Naive thymus-derived CD4-positive, alpha-beta T cell (primary cell): ENCODE measurements at regions of chr11 and their contacts with region 1.

Region 1: GRCh38 chr11:355581-356458 is 13.5 kb upstream of the B4GALNT4 start:
- DNase-seq: peak; percentile 74 to 92 (median 90)
- ATAC-seq: peak; percentile 89
- H3K4me3 ChIP-seq: peak overlapping the region; percentile 66
- H3K4me3 Mint-ChIP-seq: peak overlapping the region in 8 of 10 donors; percentile 83 to 93 (median 88)
- H3K27ac ChIP-seq: peak overlapping the region; percentile 97
- H3K27ac Mint-ChIP-seq: peak overlapping the region in 6 of 9 donors; percentile 89 to 99 (median 98)
- H3K4me1 ChIP-seq: peaks cover 9 to 19% of the 10 kb centered on the region in 2 donors
- H3K4me1 Mint-ChIP-seq: peaks cover 29 to 45% (median 37%) of the 10 kb centered on the region in 7 donors
- H3K27me3 ChIP-seq: no peaks in the 10 kb centered on the region
- H3K27me3 Mint-ChIP-seq: peaks cover 0 to 6% (median 0%) of the 10 kb centered on the region in 5 donors

Region 2: DNA sequence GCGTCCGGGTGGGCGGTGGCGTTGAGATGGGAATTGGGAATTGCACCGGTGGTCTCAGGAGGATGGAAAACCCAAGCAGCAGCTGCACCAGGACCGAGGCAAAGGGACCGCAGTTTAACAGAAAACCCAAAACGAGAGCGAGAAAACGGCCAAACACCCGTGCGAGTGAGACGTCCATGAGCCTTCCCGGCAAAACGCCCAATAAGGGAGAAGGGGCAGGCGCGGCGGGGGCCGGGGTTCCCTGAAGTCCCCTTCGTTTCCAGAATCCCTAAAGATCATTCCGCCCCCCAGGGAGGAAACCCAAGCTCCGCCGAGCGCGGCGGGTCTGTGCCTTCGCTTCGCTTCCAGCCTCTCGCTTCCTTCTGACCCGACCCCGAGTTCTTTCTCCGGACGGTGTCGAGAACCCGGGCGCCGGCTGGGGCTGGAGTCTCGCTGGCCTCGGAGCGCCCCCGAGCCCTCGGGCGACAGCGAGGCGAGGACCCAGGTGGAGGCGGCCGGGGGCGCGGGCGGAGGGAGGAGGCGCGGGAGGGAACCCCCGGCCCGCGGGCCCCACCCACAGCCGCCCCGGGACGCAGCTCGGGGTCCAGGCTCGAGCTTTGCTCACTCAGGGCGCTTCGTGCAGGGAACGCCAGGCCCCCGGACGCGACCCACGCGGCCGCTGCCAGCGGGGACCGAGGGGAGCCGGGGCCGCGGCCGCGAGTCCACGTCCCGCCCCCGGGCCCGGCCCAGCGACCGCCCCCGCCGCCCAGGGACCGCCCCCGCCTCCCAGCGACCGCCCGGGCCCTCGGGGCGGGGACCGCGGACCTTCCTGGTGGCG is 67.3 kb before region 1 on chr11 and contains the start of gene PGGHG:
- CTCF ChIA-PET with region 1: interaction called, 3 read pairs
- POLR2A ChIA-PET with region 1: interaction called, 22 read pairs
- intact Hi-C with region 1: no loop called
- DNase-seq: peak in 5 of 9 donors; percentile 40 to 72 (median 49)
- ATAC-seq: peak; percentile 65
- H3K4me3 ChIP-seq: peak within 1 kb of the TSS; percentile 64
- H3K4me3 Mint-ChIP-seq: peak within 1 kb of the TSS; percentile 88 to 100 (median 98)
- H3K27ac ChIP-seq: peak within 1 kb of the TSS; percentile 100
- H3K27ac Mint-ChIP-seq: peak within 1 kb of the TSS; percentile 89 to 100 (median 98)
- H3K4me1 ChIP-seq: peaks cover 16% of the 10 kb centered on the region in 2 donors
- H3K4me1 Mint-ChIP-seq: peaks cover 22 to 52% (median 38%) of the 10 kb centered on the region in 7 donors
- H3K27me3 ChIP-seq: no peaks in the 10 kb centered on the region
- H3K27me3 Mint-ChIP-seq: peaks cover 0 to 14% (median 0%) of the 10 kb centered on the region in 5 donors
- total RNA-seq, gene PGGHG: 325 to 656 (median 348) TPM

Region 3: DNA sequence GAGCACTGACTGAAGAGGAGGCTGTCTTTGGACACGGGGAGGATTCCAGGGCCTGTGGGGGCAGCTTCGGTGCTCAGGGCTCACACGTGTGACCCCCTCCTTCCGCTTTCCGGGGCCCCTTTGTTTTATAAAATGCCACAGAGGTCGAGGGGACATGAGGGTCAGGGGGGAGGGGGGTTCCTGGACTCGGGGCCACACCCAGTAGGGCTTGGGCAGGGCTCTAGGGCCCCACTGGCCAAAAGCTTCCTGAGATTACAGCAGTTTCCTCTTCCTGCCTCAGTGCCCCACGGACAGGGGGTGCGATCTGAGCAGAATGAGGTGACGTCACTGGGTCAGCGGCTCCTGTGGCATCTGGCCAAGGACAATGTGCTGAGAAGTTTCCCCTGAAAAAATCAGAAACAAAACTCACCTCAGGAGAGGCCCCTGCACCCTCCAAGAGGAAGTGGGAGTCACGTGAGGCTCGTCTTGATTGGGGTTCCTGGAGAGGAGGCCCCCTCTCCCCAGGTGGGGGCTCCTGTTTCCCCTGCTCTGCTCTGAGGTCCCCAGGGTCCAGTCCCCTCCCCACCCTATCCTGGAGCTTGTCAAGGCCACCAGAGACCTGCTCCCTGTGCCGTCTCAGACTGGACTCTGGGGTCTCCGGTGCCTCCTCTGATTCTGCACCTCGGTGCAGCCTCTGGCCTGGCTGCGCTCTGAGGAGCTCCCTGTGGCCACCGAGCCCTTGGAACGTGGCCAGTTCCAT is 28.8 kb before region 1 on chr11:
- CTCF ChIA-PET with region 1: interaction called, 12 read pairs
- POLR2A ChIA-PET with region 1: interaction called, 16 read pairs
- intact Hi-C with region 1: loop called in 1 of 2 experiments (anchors 2 kb)
- DNase-seq: peak in 8 of 9 donors; percentile 54 to 79 (median 64)
- ATAC-seq: peak; percentile 81
- H3K4me3 ChIP-seq: peak overlapping the region; percentile 50
- H3K4me3 Mint-ChIP-seq: peak overlapping the region; percentile 66 to 85 (median 78)
- H3K27ac ChIP-seq: peak overlapping the region; percentile 88
- H3K27ac Mint-ChIP-seq: peak overlapping the region; percentile 84 to 97 (median 94)
- H3K4me1 ChIP-seq: peaks cover 40 to 67% of the 10 kb centered on the region in 2 donors
- H3K4me1 Mint-ChIP-seq: peaks cover 48 to 80% (median 72%) of the 10 kb centered on the region in 7 donors
- H3K27me3 ChIP-seq: no peaks in the 10 kb centered on the region
- H3K27me3 Mint-ChIP-seq: no peaks in the 10 kb centered on the region

Region 4: GRCh38 chr11:335779-336658 is 19.8 kb before region 1 on chr11:
- CTCF ChIA-PET with region 1: no interaction called
- POLR2A ChIA-PET with region 1: interaction called, 14 read pairs
- intact Hi-C with region 1: loop called in 1 of 2 experiments (anchors 2 kb)
- DNase-seq: no peak
- ATAC-seq: no peak
- H3K4me3 ChIP-seq: no peak overlapping the region
- H3K4me3 Mint-ChIP-seq: peak overlapping the region in 8 of 10 donors; percentile 7 to 57 (median 32)
- H3K27ac ChIP-seq: peak overlapping the region; percentile 27
- H3K27ac Mint-ChIP-seq: peak overlapping the region in 8 of 9 donors; percentile 62 to 90 (median 80)
- H3K4me1 ChIP-seq: peaks cover 9 to 25% of the 10 kb centered on the region in 2 donors
- H3K4me1 Mint-ChIP-seq: peaks cover 24 to 71% (median 44%) of the 10 kb centered on the region in 7 donors
- H3K27me3 ChIP-seq: no peaks in the 10 kb centered on the region
- H3K27me3 Mint-ChIP-seq: peaks cover 0 to 3% (median 0%) of the 10 kb centered on the region in 5 donors

Region 5: DNA sequence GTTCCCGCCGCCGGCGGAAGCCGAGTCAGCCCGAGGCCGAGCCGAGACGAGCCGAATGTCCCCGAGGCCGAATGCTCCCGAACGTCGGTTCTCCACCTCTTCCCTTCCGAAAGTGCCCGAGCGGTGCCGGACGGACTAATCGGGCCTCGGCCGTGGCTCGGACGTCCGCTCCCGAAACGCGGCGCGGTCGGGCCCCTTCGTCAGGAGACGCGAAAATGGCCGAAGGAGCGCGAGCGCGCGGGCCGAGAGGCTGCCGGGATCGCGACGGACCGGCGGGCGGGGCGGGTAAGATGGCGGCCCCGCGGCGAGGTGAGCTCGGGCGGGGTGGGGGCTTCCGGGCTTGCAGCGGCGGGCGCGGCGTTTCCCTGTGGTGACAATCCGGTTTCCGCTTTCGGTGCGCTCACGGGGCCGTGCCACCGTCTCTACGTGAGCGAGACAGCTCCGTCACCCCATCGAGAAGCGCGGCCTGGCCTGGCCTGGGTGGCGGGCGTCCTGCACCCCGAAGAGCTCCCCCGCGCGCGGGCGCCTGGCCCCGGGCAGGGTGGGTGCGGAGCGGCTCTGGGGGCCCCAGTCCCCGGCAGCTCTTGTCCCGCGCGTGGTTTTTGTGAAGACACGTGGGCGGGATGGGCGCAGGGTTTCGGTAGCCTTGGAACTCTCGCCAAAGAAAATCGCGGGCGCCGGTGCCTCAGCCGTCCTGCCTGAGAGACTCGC is 339.9 kb after region 1 on chr11 and contains the start of gene TMEM80:
- CTCF ChIA-PET with region 1: no interaction called
- POLR2A ChIA-PET with region 1: no interaction called
- intact Hi-C with region 1: no loop called
- DNase-seq: peak; percentile 91 to 98 (median 98)
- ATAC-seq: peak; percentile 76
- H3K4me3 ChIP-seq: peak within 1 kb of the TSS; percentile 97
- H3K4me3 Mint-ChIP-seq: peak within 1 kb of the TSS; percentile 84 to 92 (median 89)
- H3K27ac ChIP-seq: peak within 1 kb of the TSS; percentile 100
- H3K27ac Mint-ChIP-seq: peak within 1 kb of the TSS; percentile 88 to 98 (median 95)
- H3K4me1 ChIP-seq: peaks cover 13 to 42% of the 10 kb centered on the region in 2 donors
- H3K4me1 Mint-ChIP-seq: peaks cover 40 to 56% (median 52%) of the 10 kb centered on the region in 7 donors
- H3K27me3 ChIP-seq: no peaks in the 10 kb centered on the region
- H3K27me3 Mint-ChIP-seq: no peaks in the 10 kb centered on the region
- total RNA-seq, gene TMEM80: 26.2 to 44.3 (median 40.4) TPM